Psoas muscle (tissue), 8 donors: ENCODE measurements at regions of chr2 and their contacts with region 1.

Region 1: DNA sequence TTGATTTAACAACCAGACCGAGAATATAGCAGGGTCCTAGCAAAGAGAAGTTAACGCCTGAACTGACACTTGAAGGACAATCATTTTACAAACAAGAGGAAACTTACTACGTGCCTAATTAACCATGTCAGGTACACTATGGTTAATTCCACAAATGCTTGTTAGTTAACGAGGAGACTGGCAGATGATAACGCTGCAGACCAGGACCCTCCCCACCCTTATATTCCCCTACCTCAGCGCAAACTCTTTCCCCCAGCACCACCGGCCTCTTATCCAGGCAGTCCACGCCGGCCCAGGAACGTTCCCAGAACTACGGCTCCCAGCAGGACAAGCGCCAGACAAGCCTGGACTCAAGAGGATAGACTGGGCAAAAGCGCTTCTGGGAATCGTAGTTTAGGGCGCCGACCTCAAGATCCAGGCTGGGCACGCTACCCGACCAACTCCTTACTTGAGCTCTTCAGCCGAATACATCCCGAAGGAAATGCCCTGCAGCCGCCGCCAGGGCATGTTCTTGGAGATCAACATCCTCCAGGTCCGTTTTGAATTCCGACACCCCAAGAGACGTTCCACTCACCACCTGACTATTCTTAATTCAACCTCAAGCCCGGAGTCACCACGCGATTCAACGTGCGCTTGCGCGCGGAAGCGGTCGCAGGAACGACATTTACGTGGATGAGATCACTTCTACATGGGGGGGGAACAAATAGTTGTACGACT is at the start of gene POLR1A:
- DNase-seq: peak; percentile 88 to 94
- ATAC-seq: peak; percentile 91 to 93 (median 92)
- H3K4me3 ChIP-seq: peak within 1 kb of the TSS; percentile 77
- H3K27ac ChIP-seq: peak within 1 kb of the TSS; percentile 86
- H3K4me1 ChIP-seq: peaks cover 45% of the 10 kb centered on the region
- H3K27me3 ChIP-seq: no peaks in the 10 kb centered on the region
- CTCF ChIP-seq: peak; percentile 4
- total RNA-seq, gene POLR1A: 27.0 to 41.6 (median 36.8) TPM

Region 2: DNA sequence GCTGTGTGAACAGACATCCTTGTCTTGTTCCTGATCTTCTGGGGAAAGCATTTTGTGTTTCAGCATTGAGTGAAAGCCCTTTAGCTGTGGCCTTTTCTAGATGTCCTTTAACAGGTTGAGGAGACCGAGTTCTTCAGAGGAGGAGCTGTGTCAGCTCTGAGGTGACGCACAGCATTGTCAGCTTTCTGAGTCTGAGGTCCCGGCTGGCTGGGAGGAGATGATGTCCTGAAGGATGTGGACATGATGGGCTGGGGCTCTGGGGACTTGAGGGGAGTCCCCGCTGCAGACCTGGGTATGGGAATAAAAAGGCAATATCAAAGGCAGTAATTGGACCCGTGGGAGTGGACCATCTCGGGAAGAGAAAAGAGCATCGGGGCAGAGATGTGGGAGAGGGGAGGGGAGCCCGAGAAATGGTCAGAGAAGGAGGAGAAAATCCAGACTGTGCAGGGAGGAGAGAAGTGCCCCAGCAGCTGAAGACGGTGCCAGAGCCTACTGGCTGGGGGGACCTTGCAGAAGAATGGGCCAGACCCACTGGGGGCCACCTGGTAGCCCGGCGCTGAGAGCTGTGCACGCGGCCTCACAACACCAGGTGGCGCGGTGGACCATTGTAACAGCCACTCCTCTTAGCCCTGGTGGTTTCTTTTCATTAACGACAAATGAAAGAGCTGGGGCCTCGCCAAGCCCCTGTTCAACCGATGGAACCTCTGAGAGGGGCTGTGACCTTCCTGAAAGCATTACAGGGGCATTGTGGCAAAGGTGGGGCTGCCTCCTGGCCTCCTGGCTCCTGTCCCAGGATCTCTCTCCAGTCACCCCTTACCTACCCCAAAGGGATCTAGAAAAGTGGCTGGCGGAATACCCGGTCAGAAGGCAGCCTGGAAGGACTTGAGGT is 278.2 kb before region 1 on chr2:
- intact Hi-C with region 1: no loop called
- DNase-seq: peak; percentile 79 to 88
- ATAC-seq: peak; percentile 92 to 98 (median 92)
- H3K4me3 ChIP-seq: peak overlapping the region; percentile 42
- H3K27ac ChIP-seq: no peak overlapping the region
- H3K4me1 ChIP-seq: peaks cover 3% of the 10 kb centered on the region
- H3K27me3 ChIP-seq: no peaks in the 10 kb centered on the region
- CTCF ChIP-seq: peak; percentile 96

Region 3: GRCh38 chr2:86150502-86150901 is 45.1 kb after region 1 on chr2:
- intact Hi-C with region 1: loop called in 1 of 2 experiments (anchors 5 kb)
- DNase-seq: no peak
- ATAC-seq: no peak
- H3K4me3 ChIP-seq: no peak overlapping the region
- H3K27ac ChIP-seq: no peak overlapping the region
- H3K4me1 ChIP-seq: no peaks in the 10 kb centered on the region
- H3K27me3 ChIP-seq: no peaks in the 10 kb centered on the region
- CTCF ChIP-seq: no peak